ENCODE measurements at regions of chr20 and their contacts with region 1.

Region 1: GRCh38 chr20:2470423-2471193 is at the start of gene SNRPB:
- DNase-seq: peak; percentile 96 to 97
- H3K4me3 ChIP-seq: peak within 1 kb of the TSS; percentile 22 to 84 (median 69)
- H3K27ac ChIP-seq: peak within 1 kb of the TSS; percentile 91 to 98 (median 95)
- H3K4me1 ChIP-seq: peaks cover 8 to 15% of the 10 kb centered on the region in 2 donors
- H3K27me3 ChIP-seq: no peaks in the 10 kb centered on the region
- CTCF ChIP-seq: no peak
- POLR2A ChIP-seq: peak; percentile 20 to 97
- total RNA-seq, gene SNRPB: 119 to 176 (median 133) TPM

Region 2: GRCh38 chr20:2349818-2350508 is 120.6 kb before region 1 on chr20:
- intact Hi-C with region 1: no loop called
- DNase-seq: no peak
- H3K4me3 ChIP-seq: no peak overlapping the region
- H3K27ac ChIP-seq: no peak overlapping the region
- H3K4me1 ChIP-seq: no peaks in the 10 kb centered on the region
- H3K27me3 ChIP-seq: no peaks in the 10 kb centered on the region
- CTCF ChIP-seq: no peak
- POLR2A ChIP-seq: no peak

Region 3: DNA sequence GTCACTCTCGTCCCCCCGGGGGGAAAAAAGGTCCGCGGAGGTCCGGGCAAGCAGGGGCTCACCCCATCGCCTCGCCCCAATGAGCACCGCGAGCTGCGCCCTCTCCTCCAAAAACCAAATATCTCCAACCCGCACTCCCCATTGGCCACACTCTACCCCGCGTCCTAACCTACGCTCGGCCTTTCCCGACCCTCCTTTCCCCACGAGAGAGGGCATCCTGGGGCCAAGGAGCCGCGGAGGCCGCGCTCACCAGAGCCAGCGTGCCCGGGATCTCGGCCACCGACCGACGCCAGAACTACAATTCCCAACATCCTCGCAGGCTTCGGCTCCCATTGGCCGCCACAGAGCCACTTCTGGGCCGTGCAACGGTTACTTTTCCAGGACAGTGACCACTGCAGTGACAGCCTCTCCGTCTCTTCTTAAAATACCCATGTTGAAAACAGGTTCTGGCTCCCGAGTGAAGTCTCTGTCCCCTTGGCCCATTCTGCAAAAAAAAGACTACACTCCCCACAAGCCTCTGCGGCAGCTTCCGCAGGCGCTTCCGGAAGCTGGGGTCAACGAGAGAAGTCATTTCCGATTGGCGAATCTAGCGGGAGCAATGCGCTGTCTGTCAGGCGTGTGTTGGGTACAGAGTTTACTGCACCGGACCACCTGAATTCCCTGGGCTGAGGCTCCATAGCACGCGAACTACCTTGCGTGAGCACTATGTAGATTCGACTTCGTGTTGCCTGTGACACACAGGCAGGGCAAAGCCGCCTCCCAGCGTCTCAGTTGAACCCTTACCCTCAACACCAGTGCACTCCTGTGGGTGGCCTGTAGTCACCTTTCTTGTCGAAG is 38.2 kb after region 1 on chr20 and contains the start of gene ZNF343:
- intact Hi-C with region 1: loop called (anchors 5 kb)
- DNase-seq: peak; percentile 76 to 80
- H3K4me3 ChIP-seq: peak within 1 kb of the TSS; percentile 67 to 80 (median 75)
- H3K27ac ChIP-seq: peak within 1 kb of the TSS; percentile 74 to 93 (median 85)
- H3K4me1 ChIP-seq: peaks cover 12 to 13% of the 10 kb centered on the region in 2 donors
- H3K27me3 ChIP-seq: no peaks in the 10 kb centered on the region
- CTCF ChIP-seq: no peak
- POLR2A ChIP-seq: peak in 1 of 2 donors; percentile 61
- total RNA-seq, gene ZNF343: 11.0 to 16.3 (median 14.2) TPM

Region 4: GRCh38 chr20:2544211-2544610 is 73.6 kb after region 1 on chr20:
- intact Hi-C with region 1: no loop called
- DNase-seq: no peak
- H3K4me3 ChIP-seq: no peak overlapping the region
- H3K27ac ChIP-seq: no peak overlapping the region
- H3K4me1 ChIP-seq: peaks cover 5 to 6% of the 10 kb centered on the region in 2 donors
- H3K27me3 ChIP-seq: no peaks in the 10 kb centered on the region
- CTCF ChIP-seq: no peak
- POLR2A ChIP-seq: no peak